MCF 10A (cell line): ENCODE measurements at regions of chr15 and their contacts with region 1.

Region 1: DNA sequence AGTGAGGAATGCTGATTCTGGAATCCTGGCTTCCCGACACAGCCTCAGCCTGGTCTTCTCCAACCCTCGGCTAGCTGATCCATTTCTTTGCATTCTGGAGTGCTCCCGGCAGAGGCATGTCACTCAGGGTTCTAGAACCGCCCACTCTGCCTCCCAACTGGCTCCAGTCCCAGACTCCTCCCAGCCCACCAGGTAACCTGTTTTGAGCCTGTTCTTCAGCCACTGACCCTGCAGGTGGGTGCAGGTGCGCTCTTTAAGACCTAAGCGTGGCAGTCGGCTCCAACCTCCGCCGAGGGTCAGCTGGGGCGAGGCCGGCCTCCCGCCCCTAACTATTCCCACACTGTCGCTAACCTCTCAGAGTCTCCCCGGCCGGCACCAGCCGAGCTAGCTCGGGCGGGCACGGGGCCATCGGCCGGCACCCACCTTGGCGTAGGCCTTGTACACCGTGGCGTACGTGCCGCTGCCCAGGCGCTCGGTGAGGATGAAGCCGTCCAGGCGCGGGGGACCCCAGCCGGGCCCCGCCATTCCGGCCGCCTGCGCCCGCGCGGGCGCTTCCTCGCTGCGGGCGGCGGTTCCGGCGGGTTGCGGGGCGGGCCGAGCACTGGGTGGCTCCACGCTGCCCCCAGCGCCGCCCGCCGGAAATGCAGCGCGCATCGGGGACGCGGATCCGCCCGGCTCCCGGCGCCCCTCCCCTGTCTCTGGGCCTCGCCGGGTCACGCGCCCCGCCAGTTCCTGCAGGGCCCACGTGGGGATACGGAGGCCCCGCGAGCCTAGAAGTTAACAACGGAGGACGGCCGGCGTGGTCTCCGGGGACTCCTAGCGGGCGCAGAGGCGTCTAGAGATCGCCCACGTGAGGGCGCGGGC is at the start of gene ULK3:
- DNase-seq: peak; percentile 89
- H3K4me3 Mint-ChIP-seq: peak within 1 kb of the TSS; percentile 83
- H3K27ac Mint-ChIP-seq: peak within 1 kb of the TSS; percentile 49
- H3K4me1 Mint-ChIP-seq: no peaks in the 10 kb centered on the region
- H3K27me3 Mint-ChIP-seq: no peaks in the 10 kb centered on the region
- CTCF ChIP-seq: peak; percentile 76
- total RNA-seq, gene ULK3: 27.6 and 31.3 TPM in 2 replicates

Region 2: DNA sequence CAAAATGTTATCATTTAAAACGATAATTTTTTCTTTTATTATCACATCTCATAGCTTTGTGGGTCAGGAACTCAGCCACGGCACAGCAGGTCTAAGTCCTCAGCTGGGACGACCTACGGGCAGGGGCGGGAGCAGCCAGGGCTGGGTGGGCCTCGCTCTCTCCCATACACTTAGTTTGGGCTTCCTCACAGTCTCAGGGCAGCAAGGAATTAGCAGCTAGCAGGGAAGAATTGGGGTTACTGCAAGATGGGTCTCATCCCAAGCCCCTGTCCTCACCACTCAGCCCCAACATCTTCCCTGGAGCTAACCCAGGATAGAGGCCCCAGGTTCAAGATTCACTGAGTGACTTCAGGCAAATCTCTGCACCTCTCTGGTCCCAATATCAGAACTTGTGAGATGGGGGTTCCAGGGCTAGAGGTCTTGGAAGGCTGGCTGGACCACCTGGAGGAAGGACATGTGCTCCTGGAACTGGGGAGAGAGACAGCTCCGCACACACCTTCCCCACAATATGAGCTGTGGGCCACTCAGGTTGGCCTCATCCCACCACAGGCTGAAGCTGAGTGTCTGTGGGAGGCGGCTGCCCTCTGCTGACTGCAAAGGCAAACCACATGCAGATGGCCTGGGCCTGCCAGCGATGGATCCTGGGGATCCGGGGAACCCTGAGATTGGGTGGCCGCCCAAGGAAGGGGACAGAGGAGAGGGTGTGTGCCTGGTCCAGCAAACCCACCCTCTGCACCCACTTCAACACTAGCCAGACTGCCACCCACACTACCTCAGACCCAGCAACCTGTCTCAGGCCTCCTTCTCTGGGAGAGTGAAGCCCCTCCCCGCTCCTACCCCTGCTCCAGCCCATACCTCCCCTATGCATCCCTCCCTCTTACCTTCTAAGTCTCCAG is 520.4 kb before region 1 on chr15:
- CTCF ChIA-PET with region 1: no interaction called
- POLR2A ChIA-PET with region 1: no interaction called
- intact Hi-C with region 1: no loop called
- DNase-seq: peak; percentile 62
- H3K4me3 Mint-ChIP-seq: no peak overlapping the region
- H3K27ac Mint-ChIP-seq: no peak overlapping the region
- H3K4me1 Mint-ChIP-seq: no peaks in the 10 kb centered on the region
- H3K27me3 Mint-ChIP-seq: no peaks in the 10 kb centered on the region
- CTCF ChIP-seq: peak; percentile 91

Region 3: GRCh38 chr15:74460871-74461846 is 381.7 kb before region 1 on chr15 and contains the start of gene UBL7:
- CTCF ChIA-PET with region 1: no interaction called
- POLR2A ChIA-PET with region 1: no interaction called
- intact Hi-C with region 1: no loop called
- DNase-seq: peak; percentile 97
- H3K4me3 Mint-ChIP-seq: peak within 1 kb of the TSS; percentile 93
- H3K27ac Mint-ChIP-seq: peak within 1 kb of the TSS; percentile 70
- H3K4me1 Mint-ChIP-seq: peaks cover 30% of the 10 kb centered on the region
- H3K27me3 Mint-ChIP-seq: no peaks in the 10 kb centered on the region
- CTCF ChIP-seq: no peak
- total RNA-seq, gene UBL7: 55.5 and 56.4 TPM in 2 replicates

Region 4: GRCh38 chr15:74816808-74817674 is 25.8 kb before region 1 on chr15:
- CTCF ChIA-PET with region 1: interaction called, 5 read pairs
- POLR2A ChIA-PET with region 1: no interaction called
- intact Hi-C with region 1: loop called (anchors 1 kb)
- DNase-seq: peak; percentile 70
- H3K4me3 Mint-ChIP-seq: no peak overlapping the region
- H3K27ac Mint-ChIP-seq: peak overlapping the region; percentile 82
- H3K4me1 Mint-ChIP-seq: peaks cover 45% of the 10 kb centered on the region
- H3K27me3 Mint-ChIP-seq: no peaks in the 10 kb centered on the region
- CTCF ChIP-seq: peak; percentile 38

Region 5: GRCh38 chr15:76674883-76675282 is 1832.1 kb after region 1 on chr15:
- CTCF ChIA-PET with region 1: no interaction called
- POLR2A ChIA-PET with region 1: no interaction called
- intact Hi-C with region 1: no loop called
- DNase-seq: no peak
- H3K4me3 Mint-ChIP-seq: no peak overlapping the region
- H3K27ac Mint-ChIP-seq: no peak overlapping the region
- H3K4me1 Mint-ChIP-seq: no peaks in the 10 kb centered on the region
- H3K27me3 Mint-ChIP-seq: no peaks in the 10 kb centered on the region
- CTCF ChIP-seq: no peak